Naive thymus-derived CD4-positive, alpha-beta T cell (primary cell): ENCODE measurements at regions of chr2 and their contacts with region 1.

Region 1: DNA sequence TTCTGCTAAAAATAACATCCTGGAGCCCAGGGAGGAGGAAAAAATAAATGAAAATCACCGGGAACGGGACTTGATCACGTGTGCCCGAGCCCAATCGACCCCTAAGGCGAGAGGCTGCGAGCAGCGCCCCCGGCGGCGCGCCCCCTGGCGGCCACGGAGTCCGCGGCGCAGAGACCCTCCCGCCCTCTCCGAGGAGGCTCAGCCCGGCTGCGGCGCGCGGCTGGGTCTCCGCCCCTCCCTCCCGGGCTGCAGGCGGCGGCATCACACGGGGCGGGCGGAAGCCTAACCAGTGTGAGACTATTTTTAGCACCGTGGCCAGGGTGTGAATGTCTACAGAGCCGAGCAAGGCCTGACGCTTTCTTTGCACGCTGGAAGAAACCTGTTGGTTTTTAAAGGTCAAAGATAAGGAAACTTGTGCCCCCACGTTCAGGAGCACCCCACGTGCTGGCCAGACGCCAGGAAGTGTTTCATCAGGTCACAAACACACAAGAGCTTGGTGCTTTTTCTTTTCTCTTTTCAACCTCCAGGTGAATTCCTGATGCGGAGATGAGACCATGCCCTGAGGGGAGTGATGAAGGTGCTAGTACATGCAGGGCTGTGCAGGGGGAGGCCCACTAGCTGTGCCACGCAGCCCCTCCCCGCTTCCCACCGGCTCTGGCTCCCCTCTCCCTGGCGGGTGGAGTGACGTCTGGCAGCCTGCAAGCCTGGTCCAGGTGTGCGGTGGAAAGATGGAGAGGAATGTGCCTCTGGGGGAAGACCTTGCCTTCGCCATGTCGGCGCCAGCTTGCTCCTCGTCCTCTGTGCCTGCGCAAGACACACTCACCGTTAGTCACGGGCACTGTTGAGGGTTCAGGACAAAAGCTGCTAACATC is 35.3 kb upstream of the DNMT3A start:
- DNase-seq: peak; percentile 89 to 94 (median 92)
- ATAC-seq: peak; percentile 99
- H3K4me3 ChIP-seq: peak overlapping the region; percentile 53
- H3K4me3 Mint-ChIP-seq: peak overlapping the region; percentile 67 to 87 (median 74)
- H3K27ac ChIP-seq: peak overlapping the region; percentile 66
- H3K27ac Mint-ChIP-seq: peak overlapping the region; percentile 90 to 97 (median 94)
- H3K4me1 ChIP-seq: peaks cover 28 to 31% of the 10 kb centered on the region in 2 donors
- H3K4me1 Mint-ChIP-seq: peaks cover 29 to 49% (median 32%) of the 10 kb centered on the region in 7 donors
- H3K27me3 ChIP-seq: no peaks in the 10 kb centered on the region
- H3K27me3 Mint-ChIP-seq: no peaks in the 10 kb centered on the region

Region 2: GRCh38 chr2:25215948-25216679 is 160.9 kb before region 1 on chr2:
- CTCF ChIA-PET with region 1: interaction called, 4 read pairs
- POLR2A ChIA-PET with region 1: no interaction called
- intact Hi-C with region 1: loop called in 1 of 2 experiments (anchors 5 kb)
- DNase-seq: peak; percentile 73 to 88 (median 85)
- ATAC-seq: peak; percentile 96
- H3K4me3 ChIP-seq: peak overlapping the region; percentile 61
- H3K4me3 Mint-ChIP-seq: peak overlapping the region; percentile 71 to 88 (median 78)
- H3K27ac ChIP-seq: peak overlapping the region; percentile 74
- H3K27ac Mint-ChIP-seq: peak overlapping the region; percentile 64 to 94 (median 89)
- H3K4me1 ChIP-seq: peaks cover 0 to 6% of the 10 kb centered on the region in 2 donors
- H3K4me1 Mint-ChIP-seq: peaks cover 9 to 33% (median 18%) of the 10 kb centered on the region in 7 donors
- H3K27me3 ChIP-seq: no peaks in the 10 kb centered on the region
- H3K27me3 Mint-ChIP-seq: no peaks in the 10 kb centered on the region

Region 3: DNA sequence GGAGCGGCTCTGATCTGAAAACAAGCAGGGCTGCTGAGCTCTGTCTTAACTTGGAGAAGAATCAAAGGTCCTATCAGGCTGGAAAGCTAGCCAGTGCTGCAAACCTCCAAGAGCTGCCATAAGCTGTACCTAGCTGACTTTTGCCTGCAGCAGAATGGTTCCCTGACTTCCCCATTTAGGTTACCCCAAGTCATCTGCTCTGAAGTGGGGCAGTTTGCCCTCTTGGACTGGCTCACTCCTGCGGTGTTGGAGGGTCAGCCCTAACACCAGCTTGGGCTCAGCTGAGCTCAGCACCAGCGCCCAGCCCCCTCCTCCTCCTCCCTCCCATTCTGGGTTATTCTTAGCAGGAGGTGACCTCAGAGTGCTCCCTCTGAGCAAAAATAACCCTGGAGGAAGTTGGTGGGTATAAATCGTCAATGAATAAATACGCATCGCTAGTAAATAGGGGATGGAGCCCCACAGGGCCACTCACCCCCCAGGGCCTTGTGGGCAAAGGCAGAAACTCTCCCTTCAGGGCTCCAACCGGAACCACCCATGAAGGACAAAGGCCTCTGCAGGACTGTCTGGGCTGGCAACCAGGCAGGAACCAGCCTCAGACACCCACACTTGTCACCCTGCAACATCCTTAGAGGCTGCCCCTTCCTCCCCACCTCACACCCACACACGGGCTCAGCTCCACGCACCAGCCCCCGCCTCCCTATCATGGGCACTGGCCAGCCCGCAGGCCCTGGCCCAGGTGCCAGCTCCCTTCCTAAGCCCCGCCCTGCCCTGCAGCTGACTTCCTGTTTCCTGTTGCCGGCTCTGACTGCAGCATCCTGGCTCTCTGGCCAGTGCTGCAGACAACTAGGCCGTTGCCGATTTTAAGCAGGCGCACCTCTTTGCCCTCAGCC is 82.2 kb before region 1 on chr2:
- CTCF ChIA-PET with region 1: no interaction called
- POLR2A ChIA-PET with region 1: interaction called, 5 read pairs
- intact Hi-C with region 1: loop called in 1 of 2 experiments (anchors 2 kb)
- DNase-seq: peak; percentile 51 to 79 (median 73)
- ATAC-seq: peak; percentile 89
- H3K4me3 ChIP-seq: peak overlapping the region; percentile 46
- H3K4me3 Mint-ChIP-seq: peak overlapping the region; percentile 72 to 85 (median 82)
- H3K27ac ChIP-seq: peak overlapping the region; percentile 81
- H3K27ac Mint-ChIP-seq: peak overlapping the region; percentile 90 to 99 (median 97)
- H3K4me1 ChIP-seq: peaks cover 31 to 61% of the 10 kb centered on the region in 2 donors
- H3K4me1 Mint-ChIP-seq: peaks cover 39 to 75% (median 55%) of the 10 kb centered on the region in 7 donors
- H3K27me3 ChIP-seq: no peaks in the 10 kb centered on the region
- H3K27me3 Mint-ChIP-seq: no peaks in the 10 kb centered on the region

Region 4: GRCh38 chr2:25342372-25343186 is 34.4 kb before region 1 on chr2:
- CTCF ChIA-PET with region 1: interaction called, 11 read pairs
- POLR2A ChIA-PET with region 1: interaction called, 5 read pairs
- intact Hi-C with region 1: loop called (anchors 1 kb)
- DNase-seq: peak; percentile 67 to 88 (median 77)
- ATAC-seq: peak; percentile 95
- H3K4me3 ChIP-seq: peak overlapping the region; percentile 56
- H3K4me3 Mint-ChIP-seq: peak overlapping the region; percentile 68 to 88 (median 78)
- H3K27ac ChIP-seq: no peak overlapping the region
- H3K27ac Mint-ChIP-seq: peak overlapping the region in 6 of 9 donors; percentile 10 to 89 (median 56)
- H3K4me1 ChIP-seq: peaks cover 5 to 29% of the 10 kb centered on the region in 2 donors
- H3K4me1 Mint-ChIP-seq: peaks cover 18 to 30% (median 27%) of the 10 kb centered on the region in 7 donors
- H3K27me3 ChIP-seq: no peaks in the 10 kb centered on the region
- H3K27me3 Mint-ChIP-seq: no peaks in the 10 kb centered on the region

Region 5: DNA sequence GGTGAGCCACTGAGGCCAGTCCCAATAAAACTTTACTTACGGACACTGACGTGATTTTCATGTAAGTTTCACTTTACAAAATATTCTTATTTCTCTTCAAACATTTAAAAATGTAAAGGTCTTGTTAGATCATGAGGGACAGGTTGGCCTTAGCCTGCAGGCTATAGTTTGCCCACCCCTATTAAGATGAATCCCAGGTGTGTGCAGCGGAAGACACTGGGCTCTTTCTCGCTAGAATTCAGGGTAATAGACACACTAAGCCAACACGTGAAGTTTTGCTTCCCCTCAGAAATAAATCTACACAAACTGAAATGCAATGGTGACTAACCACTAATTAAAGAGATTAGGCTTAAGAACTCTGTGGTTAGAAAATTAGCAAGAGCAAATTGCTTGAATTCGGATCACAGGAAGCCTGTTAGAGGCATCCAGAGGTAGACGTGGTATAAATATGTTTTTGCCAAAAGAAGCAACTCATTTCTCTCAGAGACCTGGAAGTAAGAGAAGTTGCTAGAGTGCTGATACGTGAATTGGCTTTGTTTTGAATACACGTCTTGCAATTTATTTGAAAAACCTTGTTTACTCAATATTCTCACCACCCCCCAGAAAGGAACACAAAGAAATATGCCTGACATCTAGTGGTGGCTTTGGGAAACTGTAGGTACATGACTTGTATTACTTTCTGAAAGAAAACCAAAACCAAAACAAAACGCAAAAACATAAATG is 144.8 kb after region 1 on chr2:
- CTCF ChIA-PET with region 1: no interaction called
- POLR2A ChIA-PET with region 1: no interaction called
- intact Hi-C with region 1: loop called (anchors 1 kb)
- DNase-seq: peak in 7 of 9 donors; percentile 59 to 82 (median 72)
- ATAC-seq: peak; percentile 99
- H3K4me3 ChIP-seq: no peak overlapping the region
- H3K4me3 Mint-ChIP-seq: peak overlapping the region in 8 of 10 donors; percentile 4 to 77 (median 42)
- H3K27ac ChIP-seq: no peak overlapping the region
- H3K27ac Mint-ChIP-seq: peak overlapping the region in 8 of 9 donors; percentile 38 to 88 (median 66)
- H3K4me1 ChIP-seq: peaks cover 4 to 5% of the 10 kb centered on the region in 2 donors
- H3K4me1 Mint-ChIP-seq: peaks cover 0 to 25% (median 8%) of the 10 kb centered on the region in 7 donors
- H3K27me3 ChIP-seq: no peaks in the 10 kb centered on the region
- H3K27me3 Mint-ChIP-seq: no peaks in the 10 kb centered on the region

Region 6: DNA sequence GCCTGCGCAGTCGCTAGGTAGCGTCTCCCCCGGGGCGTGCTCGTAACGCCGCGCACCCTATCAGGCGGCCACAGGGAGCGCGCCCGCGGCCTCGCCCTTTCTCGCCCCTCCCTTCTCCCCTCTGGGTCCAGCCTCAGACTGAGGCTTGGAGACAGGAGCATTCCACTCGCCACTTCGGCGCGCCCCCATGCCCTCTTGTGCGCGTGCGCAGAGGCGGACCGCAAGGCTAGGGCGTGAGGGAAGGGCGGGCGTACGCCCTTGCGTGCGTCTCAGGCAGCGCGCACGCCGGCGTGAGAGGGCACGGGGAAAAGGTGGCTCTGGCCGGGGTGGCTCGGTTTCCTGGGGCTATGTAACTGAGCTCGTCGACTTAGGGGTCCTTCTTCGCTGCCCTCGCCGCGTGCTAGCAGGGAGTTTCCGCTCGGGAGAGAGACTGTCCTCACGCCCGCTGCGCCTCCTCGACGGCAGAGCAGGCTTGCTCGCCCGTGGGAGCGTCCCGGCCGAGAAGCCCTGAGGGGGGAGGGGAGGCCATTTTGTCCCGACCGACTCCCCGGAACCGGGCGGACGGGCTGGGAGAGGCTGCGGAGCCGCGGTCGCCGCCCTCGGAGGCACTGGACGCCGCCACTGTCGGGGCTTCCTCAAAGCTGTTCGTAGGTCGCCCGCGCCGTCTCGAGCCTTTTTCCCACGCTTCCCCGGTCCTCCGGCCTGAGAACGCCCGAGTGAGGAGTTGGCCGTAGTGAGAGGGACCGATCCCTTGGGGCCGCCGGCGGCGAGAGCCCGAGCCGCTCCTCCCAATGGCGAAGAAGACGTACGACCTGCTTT is 657.0 kb after region 1 on chr2 and contains the start of gene RAB10:
- CTCF ChIA-PET with region 1: no interaction called
- POLR2A ChIA-PET with region 1: no interaction called
- intact Hi-C with region 1: loop called in 1 of 2 experiments (anchors 1 kb)
- DNase-seq: peak; percentile 98 to 100 (median 99)
- ATAC-seq: peak; percentile 95
- H3K4me3 ChIP-seq: peak within 1 kb of the TSS; percentile 96
- H3K4me3 Mint-ChIP-seq: peak within 1 kb of the TSS; percentile 90 to 99 (median 96)
- H3K27ac ChIP-seq: peak within 1 kb of the TSS; percentile 90
- H3K27ac Mint-ChIP-seq: peak within 1 kb of the TSS; percentile 86 to 97 (median 95)
- H3K4me1 ChIP-seq: peaks cover 18 to 24% of the 10 kb centered on the region in 2 donors
- H3K4me1 Mint-ChIP-seq: peaks cover 31 to 48% (median 41%) of the 10 kb centered on the region in 7 donors
- H3K27me3 ChIP-seq: no peaks in the 10 kb centered on the region
- H3K27me3 Mint-ChIP-seq: peaks cover 0 to 2% (median 0%) of the 10 kb centered on the region in 5 donors
- total RNA-seq, gene RAB10: 25.6 to 108 (median 60.5) TPM

Region 7: GRCh38 chr2:26438526-26438925 is 1061.5 kb after region 1 on chr2:
- CTCF ChIA-PET with region 1: no interaction called
- POLR2A ChIA-PET with region 1: no interaction called
- intact Hi-C with region 1: no loop called
- DNase-seq: no peak
- ATAC-seq: no peak
- H3K4me3 ChIP-seq: no peak overlapping the region
- H3K4me3 Mint-ChIP-seq: no peak overlapping the region
- H3K27ac ChIP-seq: no peak overlapping the region
- H3K27ac Mint-ChIP-seq: no peak overlapping the region
- H3K4me1 ChIP-seq: no peaks in the 10 kb centered on the region
- H3K4me1 Mint-ChIP-seq: peaks cover 0 to 3% (median 0%) of the 10 kb centered on the region in 7 donors
- H3K27me3 ChIP-seq: no peaks in the 10 kb centered on the region
- H3K27me3 Mint-ChIP-seq: peaks cover 0 to 24% (median 7%) of the 10 kb centered on the region in 5 donors